GM13977 (cell line): ENCODE measurements at regions of chr22 and their contacts with region 1.

Region 1: DNA sequence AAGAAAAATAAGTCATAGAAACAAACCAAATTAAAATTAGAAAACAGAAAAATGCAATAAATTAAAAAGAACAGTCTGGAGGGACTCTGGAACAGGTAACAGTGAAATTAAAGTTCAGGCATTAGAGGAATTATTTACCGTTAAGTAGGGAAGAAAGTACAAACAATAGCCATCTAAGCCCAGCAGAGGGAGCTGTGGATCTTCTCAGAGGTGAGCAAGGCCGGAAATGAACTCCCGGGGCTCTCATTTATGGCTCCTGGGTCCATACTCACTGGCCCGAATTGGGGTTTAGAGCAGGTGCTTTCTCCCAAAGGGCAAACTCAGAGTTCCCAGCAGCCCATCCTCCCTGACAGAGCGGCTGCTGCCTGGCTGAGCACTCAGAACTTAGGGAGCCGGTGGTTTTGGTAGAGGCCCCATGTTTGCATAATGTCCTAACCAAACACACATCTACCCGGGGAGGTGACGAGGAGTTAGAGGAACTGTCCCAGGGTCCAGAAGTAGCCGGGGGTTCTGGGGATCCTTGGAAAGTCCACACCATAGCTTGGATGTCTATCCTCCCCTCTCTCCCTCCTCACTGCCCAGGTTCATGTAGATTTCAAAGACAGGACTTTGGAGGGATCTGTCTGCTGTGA is 87.8 kb upstream of the VPREB1 start:
- DNase-seq: peak; percentile 84
- CTCF ChIP-seq: peak; percentile 92

Region 2: GRCh38 chr22:21990445-21991303 is 166.2 kb before region 1 on chr22:
- in situ Hi-C with region 1: no loop called
- DNase-seq: peak; percentile 13
- CTCF ChIP-seq: no peak

Region 3: DNA sequence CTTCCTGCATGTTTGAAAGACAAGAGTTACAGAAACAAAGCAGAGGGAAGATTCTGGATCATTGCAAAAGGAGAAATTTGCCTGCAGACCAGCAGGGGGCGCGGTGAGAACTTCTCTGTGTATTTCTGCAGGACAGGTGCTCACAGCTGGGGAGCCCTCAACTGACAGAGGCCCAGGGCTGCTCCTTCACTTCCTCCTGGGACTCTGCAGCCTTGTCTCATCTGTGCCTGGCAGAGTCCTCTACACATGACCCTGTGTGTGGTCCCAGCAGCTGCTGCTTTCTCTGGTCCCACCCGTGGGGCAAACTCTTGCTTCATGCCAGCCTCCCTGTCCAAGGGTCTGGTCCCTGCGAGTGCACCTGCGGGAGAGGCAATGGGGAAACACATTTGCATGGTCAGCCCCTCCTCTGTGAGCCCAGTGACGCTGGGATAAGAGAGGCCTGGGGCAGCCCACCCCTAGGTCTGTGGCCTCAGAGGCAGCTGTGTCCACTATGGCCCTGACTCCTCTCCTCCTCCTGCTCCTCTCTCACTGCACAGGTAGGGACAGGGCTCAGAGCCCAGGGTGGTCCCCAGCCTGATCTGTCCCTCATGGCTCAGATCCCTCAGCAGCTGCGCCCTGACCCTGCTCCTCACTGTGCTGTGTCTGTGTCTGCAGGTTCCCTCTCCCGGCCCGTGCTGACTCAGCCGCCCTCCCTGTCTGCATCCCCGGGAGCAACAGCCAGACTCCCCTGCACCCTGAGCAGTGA is 44.5 kb after region 1 on chr22:
- in situ Hi-C with region 1: loop called (anchors 5 kb)
- DNase-seq: peak; percentile 84
- CTCF ChIP-seq: peak; percentile 83

Region 4: DNA sequence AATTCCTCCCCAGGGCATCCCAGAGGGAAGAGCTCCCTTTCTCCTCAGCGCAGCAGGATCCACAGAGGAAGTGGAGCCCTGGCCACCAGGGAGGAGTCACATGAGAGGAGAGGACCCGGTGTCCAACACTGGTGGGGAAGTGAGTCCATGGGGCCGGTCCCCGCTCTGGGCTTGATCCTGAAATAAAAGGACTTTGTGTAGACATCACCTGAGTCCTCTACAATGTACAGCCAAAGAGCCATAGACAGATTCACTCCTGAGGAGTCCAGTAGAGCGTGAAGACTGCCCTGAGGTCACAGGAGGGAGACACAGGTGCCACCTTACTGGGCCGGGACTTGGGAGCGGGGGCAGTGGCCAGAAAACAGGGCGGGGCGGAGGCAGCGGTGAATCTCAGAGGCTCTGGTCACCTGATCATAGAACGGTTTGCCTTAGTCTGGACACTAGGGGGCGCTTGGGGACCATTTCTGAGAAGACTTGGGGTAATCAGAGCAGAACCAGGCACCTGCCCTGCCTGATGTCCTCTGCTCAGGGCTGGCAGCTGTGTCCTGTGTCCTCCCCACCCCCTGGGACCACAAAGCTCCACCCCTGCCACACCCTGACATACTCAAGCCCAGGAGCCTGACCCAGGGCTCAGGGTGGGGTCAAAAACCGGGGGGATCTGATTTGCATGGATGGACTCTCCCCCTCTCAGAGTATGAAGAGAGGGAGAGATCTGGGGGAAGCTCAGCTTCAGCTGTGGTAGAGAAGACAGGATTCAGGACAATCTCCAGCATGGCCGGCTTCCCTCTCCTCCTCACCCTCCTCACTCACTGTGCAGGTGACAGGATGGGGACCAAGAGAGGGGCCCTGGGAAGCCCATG is 200.4 kb after region 1 on chr22:
- in situ Hi-C with region 1: no loop called
- DNase-seq: peak; percentile 92
- CTCF ChIP-seq: peak; percentile 63

Region 5: GRCh38 chr22:22591348-22592299 is 434.8 kb after region 1 on chr22:
- in situ Hi-C with region 1: no loop called
- DNase-seq: no peak
- CTCF ChIP-seq: no peak